Activated CD4-positive, alpha-beta T cell treated with anti-CD3 and anti-CD28 coated beads, Interleukin-2, amount 10 ng/mL, durations not matched to agents 7 days and 5 days (primary cell): ENCODE measurements at regions of chr10 and their contacts with region 1.

Region 1: GRCh38 chr10:97025613-97026242 is 160.0 kb downstream of the SLIT1 start:
- DNase-seq: peak; percentile 65
- H3K4me3 Mint-ChIP-seq: no peak overlapping the region
- H3K27ac Mint-ChIP-seq: no peak overlapping the region
- H3K4me1 Mint-ChIP-seq: no peaks in the 10 kb centered on the region
- H3K27me3 Mint-ChIP-seq: peaks cover 3% of the 10 kb centered on the region

Region 2: DNA sequence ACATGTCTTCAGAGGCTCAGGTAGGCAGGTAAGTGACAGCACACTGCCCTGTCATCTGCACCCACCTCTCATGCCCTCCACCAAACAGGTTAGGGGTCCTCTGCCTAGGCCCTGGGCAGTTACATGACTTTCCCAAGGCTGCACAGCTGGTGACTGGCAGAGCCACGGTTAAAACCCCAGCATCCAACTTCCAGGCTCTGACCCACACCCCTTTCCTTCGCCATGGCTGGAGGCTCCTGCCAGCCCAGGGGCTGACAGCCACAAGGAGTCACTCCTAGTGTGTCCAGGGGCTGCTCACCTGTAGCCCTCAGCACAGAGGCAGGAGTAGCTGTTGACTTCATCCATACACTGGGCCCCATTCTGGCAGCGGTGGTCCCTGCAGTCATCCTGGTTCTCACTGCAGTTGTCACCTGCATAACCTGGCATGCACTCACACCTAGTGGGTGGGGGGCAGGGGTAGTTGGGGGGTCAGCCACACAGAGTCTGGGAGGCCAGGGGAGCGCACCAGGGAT is 15.0 kb before region 1 on chr10:
- CTCF ChIA-PET with region 1: interaction called, 11 read pairs
- POLR2A ChIA-PET with region 1: no interaction called
- DNase-seq: no peak
- H3K4me3 Mint-ChIP-seq: no peak overlapping the region
- H3K27ac Mint-ChIP-seq: no peak overlapping the region
- H3K4me1 Mint-ChIP-seq: peaks cover 6% of the 10 kb centered on the region
- H3K27me3 Mint-ChIP-seq: peaks cover 3% of the 10 kb centered on the region

Region 3: GRCh38 chr10:97037365-97038361 is 11.9 kb after region 1 on chr10:
- CTCF ChIA-PET with region 1: interaction called, 15 read pairs
- POLR2A ChIA-PET with region 1: no interaction called
- DNase-seq: peak; percentile 72
- H3K4me3 Mint-ChIP-seq: peak overlapping the region; percentile 33
- H3K27ac Mint-ChIP-seq: peak overlapping the region; percentile 32
- H3K4me1 Mint-ChIP-seq: peaks cover 14% of the 10 kb centered on the region
- H3K27me3 Mint-ChIP-seq: no peaks in the 10 kb centered on the region

Region 4: DNA sequence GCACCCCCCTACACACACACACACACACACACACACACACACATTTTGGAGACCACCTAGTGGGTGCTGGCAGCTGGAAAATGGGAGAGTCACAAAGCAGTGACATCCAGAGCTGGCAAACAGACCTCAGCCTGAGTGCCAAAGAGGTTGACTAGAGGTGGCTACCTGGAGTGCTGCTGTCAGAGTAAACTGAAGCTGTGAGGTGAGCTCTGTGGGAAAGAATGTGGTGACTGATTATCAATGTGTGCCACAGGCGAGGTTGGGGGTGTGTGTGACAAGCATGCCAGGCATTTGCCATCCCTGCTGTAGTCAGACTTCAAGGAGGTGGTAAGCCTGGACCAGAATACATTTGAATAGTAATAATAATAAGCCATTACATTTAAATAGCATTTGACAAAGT is 39.4 kb after region 1 on chr10:
- CTCF ChIA-PET with region 1: no interaction called
- POLR2A ChIA-PET with region 1: no interaction called
- DNase-seq: no peak
- H3K4me3 Mint-ChIP-seq: no peak overlapping the region
- H3K27ac Mint-ChIP-seq: no peak overlapping the region
- H3K4me1 Mint-ChIP-seq: peaks cover 9% of the 10 kb centered on the region
- H3K27me3 Mint-ChIP-seq: no peaks in the 10 kb centered on the region

Region 5: DNA sequence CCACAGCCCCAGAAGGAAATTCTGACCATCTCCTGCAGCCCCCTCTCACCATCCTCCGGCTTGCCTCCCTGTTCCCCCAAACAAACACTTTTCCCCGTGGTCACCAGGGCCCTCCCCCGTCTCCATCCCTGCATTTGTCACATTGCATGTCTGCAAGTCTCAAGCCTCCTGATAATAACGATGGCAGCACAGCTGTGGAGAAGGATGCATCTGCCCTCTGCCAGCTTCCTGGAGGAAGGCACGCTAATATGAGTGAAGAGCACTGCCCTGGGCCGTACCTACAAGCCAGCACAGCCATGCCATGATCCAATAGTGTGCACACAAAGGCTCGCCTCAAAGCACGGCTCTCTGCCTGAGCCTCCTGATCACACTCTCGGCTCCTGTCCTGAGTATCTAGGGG is 61.6 kb after region 1 on chr10:
- CTCF ChIA-PET with region 1: no interaction called
- POLR2A ChIA-PET with region 1: no interaction called
- DNase-seq: no peak
- H3K4me3 Mint-ChIP-seq: no peak overlapping the region
- H3K27ac Mint-ChIP-seq: no peak overlapping the region
- H3K4me1 Mint-ChIP-seq: no peaks in the 10 kb centered on the region
- H3K27me3 Mint-ChIP-seq: peaks cover 12% of the 10 kb centered on the region